ENCODE measurements at regions of chr10 and their contacts with region 1.

Region 1: GRCh38 chr10:94402015-94402842 is at the start of gene TBC1D12:
- DNase-seq: peak; percentile 92
- ATAC-seq: peak; percentile 77
- H3K4me3 ChIP-seq: peak within 1 kb of the TSS; percentile 85
- H3K27ac ChIP-seq: peak within 1 kb of the TSS; percentile 25; the same call in 1 of the 2 replicates
- H3K4me1 ChIP-seq: peaks cover 7% of the 10 kb centered on the region
- H3K27me3 ChIP-seq: no peaks in the 10 kb centered on the region
- CTCF ChIP-seq: no peak
- total RNA-seq, gene TBC1D12: 4.5 and 8.4 TPM in 2 replicates

Region 2: DNA sequence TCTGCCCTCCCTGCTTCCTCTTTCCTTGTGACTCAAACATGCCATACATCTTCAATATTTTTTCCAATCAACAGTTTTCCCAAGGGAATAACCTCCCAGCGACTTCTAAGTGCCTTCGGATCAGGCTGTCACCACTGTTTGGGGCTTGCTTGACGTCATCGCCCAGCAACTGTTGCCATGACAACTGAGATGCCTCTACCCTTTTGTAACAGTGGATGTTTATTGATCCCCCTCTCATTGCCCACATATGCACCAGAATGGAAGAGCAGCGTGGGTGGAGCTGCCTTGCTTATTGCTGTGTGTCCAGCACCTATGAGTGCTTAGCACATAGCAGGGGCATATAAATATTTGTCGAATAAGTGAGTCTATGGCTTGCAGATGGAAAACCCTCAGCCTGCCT is 821.4 kb before region 1 on chr10:
- CTCF ChIA-PET with region 1: no interaction called
- POLR2A ChIA-PET with region 1: no interaction called
- intact Hi-C with region 1: no loop called
- DNase-seq: no peak
- ATAC-seq: no peak
- H3K4me3 ChIP-seq: no peak overlapping the region
- H3K27ac ChIP-seq: no peak overlapping the region
- H3K4me1 ChIP-seq: peaks cover 27% of the 10 kb centered on the region
- H3K27me3 ChIP-seq: no peaks in the 10 kb centered on the region
- CTCF ChIP-seq: no peak

Region 3: DNA sequence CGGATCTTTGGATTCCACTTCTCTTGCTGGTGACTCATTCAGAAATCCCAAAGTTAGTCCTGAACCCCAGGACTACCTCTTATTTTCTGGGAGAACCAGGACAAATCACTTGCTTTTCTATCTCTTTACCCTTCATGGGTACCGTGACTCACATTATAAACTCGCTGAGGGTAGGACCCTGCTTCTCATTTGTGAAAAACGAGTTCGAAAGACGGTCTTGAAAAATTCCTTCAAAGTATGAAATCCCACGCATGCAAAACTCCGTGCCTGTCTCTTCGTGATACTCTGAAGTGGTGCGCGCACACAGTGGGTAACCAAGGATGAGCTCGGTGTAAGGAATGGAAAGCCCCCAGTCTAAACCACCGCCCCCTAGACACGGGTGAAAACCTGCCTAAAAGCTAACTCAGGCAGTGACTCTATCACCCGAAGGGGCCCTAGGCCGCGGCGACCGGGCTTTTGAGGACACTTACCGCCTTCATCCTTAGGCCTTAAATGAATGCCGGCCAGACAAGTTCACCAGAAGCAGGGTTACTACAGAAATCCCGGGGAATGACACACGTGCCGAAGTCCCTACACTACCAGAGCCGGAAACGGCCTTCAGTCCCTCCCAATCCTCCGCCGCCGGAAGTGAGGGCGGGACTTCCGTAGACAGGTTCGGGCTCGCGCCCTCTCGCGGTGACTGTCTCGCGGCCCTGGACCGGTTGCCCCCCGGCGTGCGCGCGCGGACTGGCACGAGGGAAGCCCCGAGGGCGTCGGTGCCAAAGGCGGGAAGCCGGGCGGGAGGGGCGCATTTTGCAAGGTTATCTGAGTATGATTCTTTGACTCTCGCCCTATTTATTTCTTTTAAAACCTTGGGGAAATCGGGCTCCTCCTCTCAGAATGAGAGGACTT is 39.6 kb before region 1 on chr10 and contains the start of gene NOC3L:
- CTCF ChIA-PET with region 1: interaction called, 3 read pairs
- POLR2A ChIA-PET with region 1: no interaction called
- intact Hi-C with region 1: loop called (anchors 1 kb)
- DNase-seq: peak; percentile 92
- ATAC-seq: peak; percentile 96
- H3K4me3 ChIP-seq: peak within 1 kb of the TSS; percentile 92
- H3K27ac ChIP-seq: peak within 1 kb of the TSS; percentile 61
- H3K4me1 ChIP-seq: peaks cover 16% of the 10 kb centered on the region
- H3K27me3 ChIP-seq: no peaks in the 10 kb centered on the region
- CTCF ChIP-seq: peak; percentile 67
- total RNA-seq, gene NOC3L: 19.4 and 23.1 TPM in 2 replicates

Region 4: DNA sequence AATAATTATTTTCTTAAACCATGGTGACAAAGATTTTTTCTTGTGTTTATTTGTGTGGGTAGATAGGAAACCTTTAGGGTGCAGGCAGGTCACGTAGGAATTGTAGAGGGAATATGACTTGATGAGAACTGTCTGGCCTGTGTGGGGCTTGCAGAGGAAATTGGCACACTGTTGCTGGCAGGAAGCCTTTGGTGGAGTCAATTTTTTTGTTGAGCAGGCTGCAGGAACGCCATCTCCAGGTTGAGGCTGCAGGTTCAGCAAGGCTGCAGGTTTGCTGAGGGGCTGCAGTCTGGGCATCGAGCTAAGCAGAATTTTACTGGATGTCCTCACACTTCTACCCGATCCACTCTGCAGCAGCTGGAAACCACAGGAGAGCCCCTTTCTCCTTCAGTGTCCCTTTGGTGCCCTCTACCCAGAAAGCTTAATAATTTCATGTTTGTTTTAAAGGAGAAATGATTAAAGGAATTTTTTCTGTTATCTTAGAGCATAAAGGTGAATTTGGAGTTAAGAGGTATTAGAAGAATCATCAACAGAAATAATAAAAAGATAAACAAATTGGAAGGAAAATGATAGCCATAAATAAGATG is 37.1 kb after region 1 on chr10:
- CTCF ChIA-PET with region 1: interaction called, 15 read pairs
- POLR2A ChIA-PET with region 1: interaction called, 31 read pairs
- intact Hi-C with region 1: loop called (anchors 5 kb)
- DNase-seq: no peak
- ATAC-seq: no peak
- H3K4me3 ChIP-seq: no peak overlapping the region
- H3K27ac ChIP-seq: no peak overlapping the region
- H3K4me1 ChIP-seq: no peaks in the 10 kb centered on the region
- H3K27me3 ChIP-seq: no peaks in the 10 kb centered on the region
- CTCF ChIP-seq: no peak

Region 5: GRCh38 chr10:95193944-95194343 is 791.7 kb after region 1 on chr10 and contains the start of gene ACSM6:
- CTCF ChIA-PET with region 1: no interaction called
- POLR2A ChIA-PET with region 1: interaction called, 21 read pairs
- intact Hi-C with region 1: no loop called
- DNase-seq: no peak
- ATAC-seq: no peak
- H3K4me3 ChIP-seq: no peak within 1 kb of the TSS
- H3K27ac ChIP-seq: no peak within 1 kb of the TSS
- H3K4me1 ChIP-seq: no peaks in the 10 kb centered on the region
- H3K27me3 ChIP-seq: no peaks in the 10 kb centered on the region
- CTCF ChIP-seq: no peak
- total RNA-seq, gene ACSM6: not detected in 2 replicates

Measured in PC-3 (cell line).